Activated T-helper 1 cell treated with anti-CD3 and anti-CD28 coated beads, Interleukin-12 subunit alpha, Interleukin-12 subunit beta, Interleukin-2, Interleukin-4 antibody, amounts not matched to agents 30 ng/mL and 10 ng/mL and 1 ng/mL, durations not matched to agents 14 hours and 24 hours and 36 hours (primary cell): ENCODE measurements at regions of chr18 and their contacts with region 1.

Region 1: DNA sequence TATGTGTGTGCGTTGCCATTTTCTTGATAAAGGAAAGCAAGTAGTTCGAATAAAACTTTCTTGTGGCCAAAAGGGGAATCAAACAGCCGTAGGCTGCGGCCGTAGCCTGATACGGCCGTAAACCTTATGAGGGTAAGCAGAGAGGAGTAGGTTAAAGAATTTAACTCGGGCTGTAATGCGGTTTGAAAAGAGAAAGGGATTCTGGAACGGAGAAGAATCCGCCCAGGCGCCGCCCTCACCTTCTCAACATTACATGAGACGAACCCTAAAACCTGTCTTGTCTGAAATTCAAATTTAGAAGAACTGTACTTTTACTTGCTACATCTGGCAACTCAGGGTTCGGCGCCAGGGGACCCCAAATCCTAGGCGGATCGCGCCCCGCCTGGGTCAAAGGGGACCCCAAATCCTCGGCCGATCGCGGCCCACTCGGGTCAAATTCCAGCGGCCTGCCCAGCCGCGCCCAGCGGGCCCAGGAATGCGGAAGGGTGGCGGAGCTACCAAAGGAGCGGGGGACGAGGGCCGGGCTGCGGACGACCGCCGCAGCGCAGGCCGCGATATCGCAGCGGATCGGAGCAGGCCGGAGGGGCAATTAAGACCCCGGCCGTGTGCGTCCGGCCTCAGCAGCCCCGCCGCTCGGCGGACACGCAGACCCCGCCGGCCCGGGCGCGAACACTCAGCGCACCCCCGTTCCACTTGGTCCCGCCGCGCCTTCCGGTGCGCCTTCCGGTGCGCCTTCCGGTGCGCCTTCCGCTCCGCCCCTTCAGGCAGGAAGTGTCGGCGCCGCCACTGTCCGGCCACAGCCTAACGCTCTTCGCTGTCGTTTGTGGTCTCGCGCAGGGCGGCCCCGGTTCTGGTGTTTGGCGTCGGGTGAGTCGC is at the start of gene MYL12B:
- DNase-seq: peak; percentile 75
- H3K4me3 Mint-ChIP-seq: peak within 1 kb of the TSS; percentile 93
- H3K27ac Mint-ChIP-seq: peak within 1 kb of the TSS; percentile 98
- H3K4me1 Mint-ChIP-seq: peaks cover 82% of the 10 kb centered on the region
- H3K27me3 Mint-ChIP-seq: no peaks in the 10 kb centered on the region
- total RNA-seq, gene MYL12B: 234 and 235 TPM in 2 replicates

Region 2: GRCh38 chr18:2571200-2572143 is 690.1 kb before region 1 on chr18 and contains the starts of genes METTL4 and NDC80:
- intact Hi-C with region 1: loop called (anchors 5 kb)
- DNase-seq: peak; percentile 79
- H3K4me3 Mint-ChIP-seq: peak within 1 kb of the TSS; percentile 97
- H3K27ac Mint-ChIP-seq: peak within 1 kb of the TSS; percentile 97
- H3K4me1 Mint-ChIP-seq: peaks cover 66% of the 10 kb centered on the region
- H3K27me3 Mint-ChIP-seq: no peaks in the 10 kb centered on the region
- total RNA-seq, gene METTL4: 15.0 and 26.2 TPM in 2 replicates
- total RNA-seq, gene NDC80: 41.2 and 42.6 TPM in 2 replicates

Region 3: DNA sequence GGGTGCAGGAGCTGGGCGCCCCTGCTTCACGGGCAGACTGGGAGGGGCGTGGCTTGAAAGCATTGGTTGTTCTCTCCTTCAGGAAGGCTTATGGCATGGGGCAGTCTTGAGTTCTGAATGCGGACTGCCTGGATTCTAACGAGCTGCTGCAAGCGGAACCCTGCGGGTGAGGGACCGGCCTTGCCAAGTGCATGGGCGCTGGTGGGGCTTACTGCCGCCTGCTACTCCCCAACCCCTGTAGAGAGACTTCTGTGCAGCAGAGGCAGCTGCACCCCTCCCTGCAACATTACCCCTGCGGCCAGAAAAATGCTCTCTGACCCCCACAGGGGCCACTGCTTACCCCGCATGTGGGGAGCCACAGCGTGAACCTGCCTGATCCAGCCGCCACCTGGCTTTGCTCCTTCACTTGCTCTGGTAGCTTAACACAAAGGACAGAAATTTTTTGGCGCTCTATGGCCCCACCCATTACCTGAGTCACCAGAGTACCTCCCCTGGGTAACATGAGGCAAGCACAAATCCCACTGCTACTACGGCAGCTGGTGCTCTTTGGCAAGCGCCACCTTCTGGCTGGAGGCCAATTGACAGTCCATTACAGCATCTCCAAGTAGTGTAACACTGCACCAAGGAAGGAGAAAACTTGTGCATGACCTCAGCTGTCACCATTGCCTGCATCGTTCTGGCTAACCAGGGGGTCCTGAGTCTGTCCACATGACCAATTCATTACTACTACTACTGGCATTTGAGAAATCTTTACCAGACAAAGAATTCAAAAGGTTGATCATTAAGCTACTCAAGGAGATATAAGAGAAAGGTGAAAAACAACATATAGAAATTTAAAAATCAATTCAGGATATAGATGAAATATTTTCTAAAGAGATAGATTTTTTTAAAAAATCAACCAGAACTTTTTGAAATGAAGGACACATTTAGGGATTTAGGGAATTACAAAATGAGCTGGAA is 35.7 kb after region 1 on chr18:
- intact Hi-C with region 1: loop called (anchors 1 kb)
- DNase-seq: peak; percentile 89
- H3K4me3 Mint-ChIP-seq: peak overlapping the region; percentile 91
- H3K27ac Mint-ChIP-seq: peak overlapping the region; percentile 82
- H3K4me1 Mint-ChIP-seq: peaks cover 15% of the 10 kb centered on the region
- H3K27me3 Mint-ChIP-seq: peaks cover 33% of the 10 kb centered on the region

Region 4: GRCh38 chr18:3305354-3305762 is 43.7 kb after region 1 on chr18:
- intact Hi-C with region 1: loop called (anchors 2 kb)
- DNase-seq: peak; percentile 44
- H3K4me3 Mint-ChIP-seq: peak overlapping the region; percentile 3
- H3K27ac Mint-ChIP-seq: peak overlapping the region; percentile 94
- H3K4me1 Mint-ChIP-seq: peaks cover 23% of the 10 kb centered on the region
- H3K27me3 Mint-ChIP-seq: peaks cover 17% of the 10 kb centered on the region

Region 5: DNA sequence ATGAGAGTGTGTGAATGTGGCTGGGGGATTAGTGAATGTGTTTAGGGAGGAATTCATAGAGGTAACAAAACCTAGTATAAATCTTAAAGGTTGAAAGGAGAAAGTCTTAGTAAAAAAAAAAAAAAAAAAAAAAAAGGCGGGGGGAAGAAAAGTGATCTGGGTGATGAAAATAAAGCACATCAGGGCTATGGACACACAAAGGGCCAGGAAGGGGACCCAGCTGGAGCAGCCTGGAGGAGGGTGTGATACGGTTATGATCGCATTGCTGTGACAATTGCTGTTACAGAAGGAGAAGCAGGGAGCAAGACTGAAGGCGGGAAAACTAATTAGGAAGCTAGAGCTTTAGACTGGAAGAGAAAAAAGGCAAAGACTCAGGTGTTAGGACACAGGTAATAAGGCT is 1108.1 kb after region 1 on chr18:
- intact Hi-C with region 1: no loop called
- DNase-seq: no peak
- H3K4me3 Mint-ChIP-seq: no peak overlapping the region
- H3K27ac Mint-ChIP-seq: no peak overlapping the region
- H3K4me1 Mint-ChIP-seq: no peaks in the 10 kb centered on the region
- H3K27me3 Mint-ChIP-seq: no peaks in the 10 kb centered on the region